ENCODE measurements at regions of chr19 and their contacts with region 1.

Region 1: GRCh38 chr19:12983542-12984142 is 11.6 kb upstream of the NFIX start:
- DNase-seq: peak; percentile 74 to 78
- H3K4me3 ChIP-seq: peak overlapping the region in 2 of 3 donors; percentile 44 to 53
- H3K27ac ChIP-seq: peak overlapping the region in 1 of 2 donors; percentile 84
- H3K4me1 ChIP-seq: peaks cover 0 to 7% of the 10 kb centered on the region in 2 donors
- H3K27me3 ChIP-seq: no peaks in the 10 kb centered on the region
- CTCF ChIP-seq: peak; percentile 95 to 98 (median 96)
- POLR2A ChIP-seq: no peak

Region 2: DNA sequence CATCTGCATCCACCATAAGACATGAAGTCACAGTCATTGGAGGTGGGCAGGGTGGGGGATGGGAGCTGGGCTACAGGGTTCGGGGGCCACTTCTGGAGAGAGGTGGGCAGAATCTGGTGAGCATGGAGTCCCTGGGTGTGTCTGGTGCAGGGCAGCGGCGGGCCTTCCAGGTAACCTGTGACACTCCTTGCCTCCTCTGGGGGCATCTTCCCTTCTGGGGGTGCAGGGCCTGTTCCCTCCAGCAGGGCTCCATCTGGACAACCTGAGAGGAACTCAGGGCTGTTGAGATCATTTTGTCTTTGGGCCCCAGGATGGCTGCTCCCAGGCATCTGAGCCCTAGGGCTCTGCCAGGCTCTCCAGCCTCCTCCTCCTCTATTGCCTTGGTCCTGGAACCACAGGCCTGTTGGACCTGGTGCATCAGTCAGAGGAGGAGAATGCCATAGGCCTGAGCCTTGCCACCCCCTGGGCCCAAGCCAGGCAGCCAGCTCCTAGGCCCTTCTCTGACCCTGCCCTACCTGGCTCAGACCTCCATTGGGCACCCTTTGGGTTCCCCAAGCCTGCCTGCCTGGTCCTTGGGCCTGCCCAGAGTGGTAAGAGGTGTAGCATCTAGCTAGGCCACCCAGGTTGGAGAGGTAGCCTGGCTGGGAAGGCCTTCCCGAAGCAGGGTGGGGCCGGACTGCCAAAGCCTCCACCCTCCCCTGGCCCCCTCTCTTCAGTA is 105.7 kb after region 1 on chr19:
- intact Hi-C with region 1: loop called (anchors 1 kb)
- DNase-seq: no peak
- H3K4me3 ChIP-seq: no peak overlapping the region
- H3K27ac ChIP-seq: peak overlapping the region; percentile 79 to 88
- H3K4me1 ChIP-seq: peaks cover 9 to 10% of the 10 kb centered on the region in 2 donors
- H3K27me3 ChIP-seq: no peaks in the 10 kb centered on the region
- CTCF ChIP-seq: peak in 2 of 3 donors; percentile 10 to 34
- POLR2A ChIP-seq: no peak